ENCODE measurements at regions of chr2 and their contacts with region 1.

Region 1: GRCh38 chr2:236240228-236241038 is 23.8 kb downstream of the ASB18 start:
- DNase-seq: peak; percentile 85 to 90
- ATAC-seq: peak; percentile 88 to 90
- H3K4me3 ChIP-seq: peak overlapping the region in 3 of 4 donors; percentile 5 to 22 (median 16)
- H3K27ac ChIP-seq: peak overlapping the region; percentile 77 to 90 (median 86)
- H3K4me1 ChIP-seq: peaks cover 23 to 45% of the 10 kb centered on the region in 2 donors
- H3K27me3 ChIP-seq: peaks cover 0 to 12% (median 0%) of the 10 kb centered on the region in 3 donors
- CTCF ChIP-seq: no peak
- POLR2A ChIP-seq: peak; percentile 14 to 51

Region 2: GRCh38 chr2:236180831-236181453 is 59.5 kb before region 1 on chr2:
- in situ Hi-C with region 1: no loop called
- intact Hi-C with region 1: loop called (anchors 5 kb)
- DNase-seq: no peak
- ATAC-seq: peak in 1 of 2 donors; percentile 31
- H3K4me3 ChIP-seq: no peak overlapping the region
- H3K27ac ChIP-seq: no peak overlapping the region
- H3K4me1 ChIP-seq: peaks cover 13 to 15% of the 10 kb centered on the region in 2 donors
- H3K27me3 ChIP-seq: peaks cover 59 to 62% (median 59%) of the 10 kb centered on the region in 3 donors
- CTCF ChIP-seq: peak; percentile 28 to 68 (median 55)
- POLR2A ChIP-seq: no peak

Region 3: GRCh38 chr2:236264256-236264655 is 23.8 kb after region 1 on chr2 and contains the start of gene ASB18:
- in situ Hi-C with region 1: no loop called
- intact Hi-C with region 1: loop called (anchors 1 kb)
- DNase-seq: peak; percentile 78 to 93
- ATAC-seq: peak; percentile 72 to 87
- H3K4me3 ChIP-seq: peak within 1 kb of the TSS in 3 of 4 donors; percentile 5 to 22 (median 21)
- H3K27ac ChIP-seq: peak within 1 kb of the TSS; percentile 77 to 90 (median 82)
- H3K4me1 ChIP-seq: peaks cover 44 to 45% of the 10 kb centered on the region in 2 donors
- H3K27me3 ChIP-seq: no peaks in the 10 kb centered on the region
- CTCF ChIP-seq: no peak
- POLR2A ChIP-seq: no peak
- total RNA-seq, gene ASB18: 0.16 to 0.17 TPM in 2 of 4 donors, not detected in the others

Region 4: DNA sequence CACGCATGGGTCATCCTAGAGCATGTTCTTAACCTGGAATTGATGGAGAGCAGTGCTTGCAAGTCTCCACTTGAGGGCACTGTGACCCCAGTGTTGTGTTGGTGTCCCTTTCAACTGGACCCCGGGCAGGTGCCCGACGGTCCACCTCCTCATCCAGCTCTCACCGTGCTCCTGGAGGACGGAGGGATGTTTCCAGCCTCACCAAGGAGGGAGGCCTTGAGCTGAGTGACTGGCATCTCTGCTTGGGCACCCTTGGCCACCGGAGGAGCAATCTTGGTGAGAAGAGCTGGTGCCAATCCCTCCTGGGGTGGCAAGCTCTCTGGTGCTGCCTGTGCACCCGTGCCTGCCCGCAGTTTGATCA is 69.2 kb after region 1 on chr2:
- in situ Hi-C with region 1: no loop called
- intact Hi-C with region 1: loop called (anchors 10 kb)
- DNase-seq: no peak
- ATAC-seq: no peak
- H3K4me3 ChIP-seq: no peak overlapping the region
- H3K27ac ChIP-seq: no peak overlapping the region
- H3K4me1 ChIP-seq: no peaks in the 10 kb centered on the region
- H3K27me3 ChIP-seq: no peaks in the 10 kb centered on the region
- CTCF ChIP-seq: peak in 1 of 5 experiments; percentile 14
- POLR2A ChIP-seq: no peak

Region 5: GRCh38 chr2:236720974-236721540 is 480.6 kb after region 1 on chr2:
- in situ Hi-C with region 1: no loop called
- intact Hi-C with region 1: loop called (anchors 10 kb)
- DNase-seq: no peak
- ATAC-seq: no peak
- H3K4me3 ChIP-seq: no peak overlapping the region
- H3K27ac ChIP-seq: no peak overlapping the region
- H3K4me1 ChIP-seq: peaks cover 6 to 12% of the 10 kb centered on the region in 2 donors
- H3K27me3 ChIP-seq: no peaks in the 10 kb centered on the region
- CTCF ChIP-seq: no peak
- POLR2A ChIP-seq: no peak

Region 6: DNA sequence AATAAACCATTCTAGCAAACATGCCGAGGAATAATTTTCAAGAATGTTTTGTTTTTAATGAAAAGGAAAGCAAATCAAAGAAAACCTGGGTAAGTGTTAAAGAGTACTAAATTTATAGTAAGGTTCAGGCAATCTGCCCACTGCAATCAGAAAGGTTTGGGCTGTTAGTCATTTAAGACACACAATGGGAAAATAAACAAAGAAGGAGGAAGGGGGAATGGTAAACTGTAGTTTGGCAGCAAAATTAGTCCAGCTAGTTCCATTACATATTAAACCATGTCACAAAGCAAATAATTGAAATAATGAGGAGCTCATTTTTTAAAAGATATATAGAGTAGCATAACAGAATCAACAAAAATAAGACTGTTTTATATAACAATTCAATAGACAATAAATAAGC is 757.8 kb after region 1 on chr2:
- in situ Hi-C with region 1: no loop called
- intact Hi-C with region 1: loop called (anchors 10 kb)
- DNase-seq: no peak
- ATAC-seq: no peak
- H3K4me3 ChIP-seq: no peak overlapping the region
- H3K27ac ChIP-seq: no peak overlapping the region
- H3K4me1 ChIP-seq: no peaks in the 10 kb centered on the region
- H3K27me3 ChIP-seq: no peaks in the 10 kb centered on the region
- CTCF ChIP-seq: no peak
- POLR2A ChIP-seq: no peak

Region 7: GRCh38 chr2:237629739-237630138 is 1389.3 kb after region 1 on chr2:
- in situ Hi-C with region 1: no loop called
- intact Hi-C with region 1: loop called (anchors 10 kb)
- DNase-seq: peak in 1 of 2 donors; percentile 77
- ATAC-seq: peak; percentile 76 to 79
- H3K4me3 ChIP-seq: no peak overlapping the region
- H3K27ac ChIP-seq: peak overlapping the region; percentile 84 to 88 (median 86)
- H3K4me1 ChIP-seq: peaks cover 59 to 71% of the 10 kb centered on the region in 2 donors
- H3K27me3 ChIP-seq: no peaks in the 10 kb centered on the region
- CTCF ChIP-seq: no peak
- POLR2A ChIP-seq: no peak

Measured in gastrocnemius medialis (tissue), 4 donors.